ENCODE measurements at regions of chr11 and their contacts with region 1.

Region 1: DNA sequence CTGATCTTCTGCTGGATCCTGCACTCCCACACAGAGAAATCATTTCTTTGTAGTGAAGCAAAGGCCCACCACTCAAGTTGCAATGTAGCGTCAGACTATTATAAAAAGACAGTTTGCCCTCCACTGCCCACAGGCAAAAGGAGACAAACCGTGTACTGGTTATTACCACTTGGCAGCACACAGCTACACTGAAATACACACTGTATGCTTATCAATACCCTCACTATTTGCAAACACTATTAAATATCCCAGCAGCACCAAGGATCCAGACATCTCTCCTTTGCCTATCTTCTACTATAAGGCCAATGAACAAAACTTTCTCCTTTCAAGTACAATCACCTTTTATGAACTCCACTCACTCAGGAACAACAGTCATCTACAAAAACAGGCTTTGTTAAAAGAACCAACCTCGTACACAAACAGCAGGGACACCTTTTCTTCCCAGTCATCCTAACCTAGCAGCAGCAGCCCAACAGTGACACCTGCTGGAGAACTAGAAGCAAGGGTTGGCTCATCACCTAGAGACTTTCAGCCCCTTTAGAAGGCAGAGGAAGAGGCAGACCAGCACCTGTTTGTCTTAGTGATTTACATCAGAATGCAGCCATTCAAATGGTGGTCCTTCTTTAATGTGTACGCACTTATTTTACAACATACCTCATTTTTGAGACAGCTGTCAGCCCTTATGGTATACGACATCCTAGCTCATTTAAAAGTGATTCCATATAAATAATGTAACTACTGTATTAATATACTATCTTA is 56.1 kb downstream of the AMBRA1 start:
- DNase-seq: peak; percentile 78 to 90 (median 82)
- ATAC-seq: peak; percentile 91
- H3K4me3 ChIP-seq: no peak overlapping the region
- H3K27ac ChIP-seq: peak overlapping the region; percentile 22; the same call in 1 of the 3 replicates
- H3K4me1 ChIP-seq: peaks cover 16 to 35% of the 10 kb centered on the region in 2 experiments
- H3K27me3 ChIP-seq: no peaks in the 10 kb centered on the region; a peak in 1 of 5 replicates
- CTCF ChIP-seq: peak; percentile 92 to 93 (median 93)
- EP300 ChIP-seq: no peak
- POLR2A ChIP-seq: no peak
- RAD21 ChIP-seq: peak; percentile 92

Region 2: DNA sequence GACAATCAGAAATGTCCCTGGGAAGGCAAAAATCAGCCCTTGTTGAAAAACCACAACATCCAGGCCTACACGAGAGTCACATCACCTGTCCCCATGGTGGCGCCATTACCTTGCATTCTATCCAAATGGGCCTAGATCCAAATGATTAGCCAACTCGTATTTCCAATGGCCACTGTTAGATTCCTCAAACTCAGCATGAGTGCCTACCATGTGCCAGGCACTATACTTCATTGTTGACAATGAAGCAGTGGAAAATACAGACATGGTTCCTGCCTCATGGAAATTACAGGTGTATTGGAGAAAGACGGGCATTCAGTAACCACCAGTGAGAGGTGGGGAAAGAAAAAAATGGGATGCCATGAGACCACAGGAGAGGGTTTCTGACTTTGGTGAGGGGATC is 290.1 kb before region 1 on chr11:
- CTCF ChIA-PET with region 1: no interaction called
- POLR2A ChIA-PET with region 1: interaction called, 3 read pairs
- in situ Hi-C with region 1: no loop called
- intact Hi-C with region 1: loop called (anchors 5 kb)
- DNase-seq: peak in 3 of 4 experiments; percentile 35 to 87 (median 71)
- ATAC-seq: peak; percentile 9; the same call in 2 of the 3 replicates
- H3K4me3 ChIP-seq: no peak overlapping the region
- H3K27ac ChIP-seq: peak overlapping the region; percentile 87
- H3K4me1 ChIP-seq: peaks cover 43 to 59% of the 10 kb centered on the region in 2 experiments
- H3K27me3 ChIP-seq: no peaks in the 10 kb centered on the region
- CTCF ChIP-seq: peak; percentile 79 to 92 (median 84)
- EP300 ChIP-seq: peak; percentile 46; the same call in 1 of the 2 replicates
- POLR2A ChIP-seq: no peak
- RAD21 ChIP-seq: peak; percentile 85 to 93

Region 3: GRCh38 chr11:46392421-46393230 is 145.1 kb before region 1 on chr11:
- CTCF ChIA-PET with region 1: interaction called, 7 read pairs
- POLR2A ChIA-PET with region 1: no interaction called
- in situ Hi-C with region 1: no loop called
- intact Hi-C with region 1: loop called (anchors 1 kb)
- DNase-seq: peak; percentile 88 to 94 (median 90)
- ATAC-seq: peak; percentile 89
- H3K4me3 ChIP-seq: peak overlapping the region; percentile 81
- H3K27ac ChIP-seq: no peak overlapping the region
- H3K4me1 ChIP-seq: peaks cover 19 to 56% of the 10 kb centered on the region in 2 experiments
- H3K27me3 ChIP-seq: peaks cover 0 to 11% of the 10 kb centered on the region in 2 experiments; a peak in 1 of 5 replicates
- CTCF ChIP-seq: 0 out of 6 replicates have a peak, but pooled peaks of 1 of the 3 experiments have one; percentile 5
- EP300 ChIP-seq: no peak
- POLR2A ChIP-seq: 0 out of 2 replicates have a peak, but pooled peaks have one; percentile 29
- RAD21 ChIP-seq: peak in 1 of 2 experiments; percentile 31; a peak in 2 of 4 replicates

Region 4: GRCh38 chr11:46465683-46466082 is 72.0 kb before region 1 on chr11:
- CTCF ChIA-PET with region 1: no interaction called
- POLR2A ChIA-PET with region 1: no interaction called
- in situ Hi-C with region 1: no loop called
- intact Hi-C with region 1: no loop called
- DNase-seq: no peak
- ATAC-seq: no peak
- H3K4me3 ChIP-seq: no peak overlapping the region
- H3K27ac ChIP-seq: no peak overlapping the region
- H3K4me1 ChIP-seq: no peaks in the 10 kb centered on the region
- H3K27me3 ChIP-seq: no peaks in the 10 kb centered on the region
- CTCF ChIP-seq: no peak
- EP300 ChIP-seq: no peak
- POLR2A ChIP-seq: no peak
- RAD21 ChIP-seq: no peak

Region 5: DNA sequence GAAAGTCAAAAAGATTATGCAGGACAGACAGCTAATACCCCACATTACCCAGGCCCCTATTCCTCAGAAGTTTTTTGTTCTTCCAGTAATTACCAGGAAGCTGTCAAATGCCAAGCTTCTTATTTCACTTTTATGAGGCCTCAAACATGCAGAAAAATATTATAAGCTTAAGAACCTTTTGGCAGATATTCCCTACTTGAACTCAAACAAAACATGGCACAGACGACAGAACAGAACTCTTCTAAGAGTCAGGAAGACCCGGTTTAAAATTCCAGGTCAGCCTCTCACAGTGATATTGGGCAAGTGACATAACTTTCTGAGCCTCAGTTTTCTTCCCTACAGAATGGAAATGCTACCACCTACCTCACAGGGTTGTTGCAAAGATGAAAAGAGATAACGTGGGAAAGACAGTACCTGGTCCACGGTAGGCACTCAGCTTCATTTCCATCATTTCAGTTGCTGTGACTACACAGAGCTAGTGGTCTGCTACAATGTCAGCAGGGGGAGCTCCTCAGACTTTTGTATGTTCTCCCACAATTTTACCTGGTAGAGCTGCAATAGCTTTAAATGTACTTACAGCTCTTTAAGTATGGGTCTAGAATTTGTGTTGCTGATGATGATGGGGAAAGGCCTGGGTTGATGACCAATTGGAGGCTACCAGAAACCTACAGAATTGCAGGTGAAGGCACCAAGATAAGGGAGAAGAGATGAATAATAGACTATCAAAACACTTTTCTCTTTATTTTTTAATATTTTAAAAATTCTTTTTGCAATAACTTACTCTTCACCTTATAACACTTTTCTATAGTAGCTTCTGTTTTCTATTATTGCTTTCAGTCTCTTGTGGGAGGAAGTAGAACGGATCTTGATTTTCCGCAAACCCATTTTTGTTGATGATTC is 47.8 kb before region 1 on chr11:
- CTCF ChIA-PET with region 1: interaction called, 11 read pairs
- POLR2A ChIA-PET with region 1: no interaction called
- in situ Hi-C with region 1: no loop called
- intact Hi-C with region 1: loop called (anchors 2 kb)
- DNase-seq: peak; percentile 30 to 69 (median 43)
- ATAC-seq: peak; percentile 98
- H3K4me3 ChIP-seq: no peak overlapping the region
- H3K27ac ChIP-seq: no peak overlapping the region
- H3K4me1 ChIP-seq: no peaks in the 10 kb centered on the region
- H3K27me3 ChIP-seq: no peaks in the 10 kb centered on the region
- CTCF ChIP-seq: peak; percentile 58 to 74 (median 70)
- EP300 ChIP-seq: no peak
- POLR2A ChIP-seq: no peak
- RAD21 ChIP-seq: peak; percentile 66 to 75

Region 6: DNA sequence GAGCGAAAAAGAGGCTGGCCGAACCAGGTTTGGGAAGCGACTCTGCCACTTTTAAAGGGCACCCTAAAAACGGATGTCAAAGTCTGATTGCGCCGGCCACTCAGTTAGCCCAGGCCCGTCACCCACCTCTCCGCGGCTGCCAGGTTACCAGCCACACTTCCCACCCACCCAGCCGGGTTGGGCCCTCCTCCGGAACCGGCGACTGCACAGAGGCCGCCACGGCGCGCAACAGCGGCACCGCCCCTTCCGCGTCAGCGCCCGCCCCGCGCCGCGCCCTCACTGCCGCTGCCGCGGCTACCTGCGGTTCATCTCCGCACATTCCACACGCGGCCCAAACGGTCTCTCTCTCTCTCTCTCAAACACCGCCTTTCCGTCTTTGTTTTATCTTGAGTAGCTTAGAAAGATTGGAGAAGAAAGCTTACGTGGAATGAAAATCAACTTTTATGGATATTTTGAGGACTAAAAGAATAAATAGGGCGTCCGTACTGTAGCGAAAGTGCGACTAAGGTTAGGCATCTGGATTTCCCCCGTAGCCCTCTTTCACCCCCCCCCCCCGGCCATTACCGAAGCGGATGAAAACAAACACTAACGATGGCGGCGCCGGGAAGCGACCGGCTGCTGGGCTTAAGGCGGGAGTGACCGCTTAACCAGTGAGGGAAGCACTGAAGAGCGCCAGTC is 79.4 kb after region 1 on chr11 and contains the starts of genes ATG13 and HARBI1:
- CTCF ChIA-PET with region 1: interaction called, 5 read pairs
- POLR2A ChIA-PET with region 1: interaction called, 6 read pairs
- in situ Hi-C with region 1: no loop called
- intact Hi-C with region 1: loop called (anchors 5 kb)
- DNase-seq: peak; percentile 89 to 92 (median 91)
- ATAC-seq: peak; percentile 92
- H3K4me3 ChIP-seq: peak within 1 kb of the TSS; percentile 99
- H3K27ac ChIP-seq: peak within 1 kb of the TSS; percentile 100
- H3K4me1 ChIP-seq: peaks cover 17 to 18% of the 10 kb centered on the region in 2 experiments; a peak in 4 of 5 replicates
- H3K27me3 ChIP-seq: no peaks in the 10 kb centered on the region
- CTCF ChIP-seq: no peak
- EP300 ChIP-seq: peak; percentile 99
- POLR2A ChIP-seq: 0 out of 2 replicates have a peak, but pooled peaks have one; percentile 71
- RAD21 ChIP-seq: no peak
- polyA plus RNA-seq, gene ATG13: 13.1 to 15.6 TPM
- polyA plus RNA-seq, gene HARBI1: 6.0 to 8.4 TPM